ENCODE measurements at regions of chr17 and their contacts with region 1.

Region 1: GRCh38 chr17:78128551-78129350 is at the start of gene TMC6:
- DNase-seq: peak in 1 of 2 donors; percentile 64
- ATAC-seq: peak; percentile 2 to 54 (median 24)
- H3K4me3 ChIP-seq: peak within 1 kb of the TSS; percentile 57 to 97 (median 88)
- H3K27ac ChIP-seq: peak within 1 kb of the TSS; percentile 89 to 98 (median 96)
- H3K4me1 ChIP-seq: peaks cover 31 to 98% (median 76%) of the 10 kb centered on the region in 9 donors
- H3K27me3 ChIP-seq: peaks cover 0 to 3% (median 0%) of the 10 kb centered on the region in 7 donors
- CTCF ChIP-seq: no peak
- total RNA-seq, gene TMC6: 42.3 to 109 (median 69.1) TPM

Region 2: GRCh38 chr17:78092794-78093324 is 35.9 kb before region 1 on chr17:
- intact Hi-C with region 1: no loop called
- DNase-seq: no peak
- ATAC-seq: no peak
- H3K4me3 ChIP-seq: no peak overlapping the region
- H3K27ac ChIP-seq: no peak overlapping the region
- H3K4me1 ChIP-seq: peaks cover 0 to 21% (median 7%) of the 10 kb centered on the region in 9 donors
- H3K27me3 ChIP-seq: no peaks in the 10 kb centered on the region
- CTCF ChIP-seq: no peak

Region 3: GRCh38 chr17:78107457-78107856 is 21.3 kb before region 1 on chr17:
- intact Hi-C with region 1: loop called in 1 of 10 experiments (anchors 2 kb)
- DNase-seq: no peak
- ATAC-seq: no peak
- H3K4me3 ChIP-seq: no peak overlapping the region
- H3K27ac ChIP-seq: peak overlapping the region in 1 of 10 donors; percentile 9
- H3K4me1 ChIP-seq: peaks cover 3 to 44% (median 13%) of the 10 kb centered on the region in 9 donors
- H3K27me3 ChIP-seq: no peaks in the 10 kb centered on the region
- CTCF ChIP-seq: no peak

Region 4: GRCh38 chr17:78168242-78168902 is 39.6 kb after region 1 on chr17 and contains the start of gene SYNGR2:
- intact Hi-C with region 1: loop called in 4 of 10 experiments (anchors 2 to 5 kb)
- DNase-seq: peak; percentile 79 to 88
- ATAC-seq: peak; percentile 38 to 89 (median 60)
- H3K4me3 ChIP-seq: peak within 1 kb of the TSS; percentile 36 to 78 (median 69)
- H3K27ac ChIP-seq: peak within 1 kb of the TSS; percentile 82 to 94 (median 91)
- H3K4me1 ChIP-seq: peaks cover 17 to 50% (median 35%) of the 10 kb centered on the region in 9 donors
- H3K27me3 ChIP-seq: no peaks in the 10 kb centered on the region
- CTCF ChIP-seq: no peak
- total RNA-seq, gene SYNGR2: 102 to 184 (median 116) TPM

Measured in heart right ventricle (tissue), 16 donors.